ENCODE measurements at regions of chr7 and their contacts with region 1.

Region 1: GRCh38 chr7:105622106-105622731 is 40.9 kb upstream of the EFCAB10 start:
- DNase-seq: no peak
- ATAC-seq: no peak
- H3K4me3 ChIP-seq: no peak overlapping the region
- H3K27ac ChIP-seq: no peak overlapping the region
- H3K4me1 ChIP-seq: no peaks in the 10 kb centered on the region
- H3K27me3 ChIP-seq: no peaks in the 10 kb centered on the region
- CTCF ChIP-seq: no peak

Region 2: GRCh38 chr7:105567821-105568220 is 54.4 kb before region 1 on chr7:
- CTCF ChIA-PET with region 1: no interaction called
- POLR2A ChIA-PET with region 1: no interaction called
- intact Hi-C with region 1: no loop called
- DNase-seq: no peak
- ATAC-seq: peak; percentile 61
- H3K4me3 ChIP-seq: no peak overlapping the region
- H3K27ac ChIP-seq: no peak overlapping the region
- H3K4me1 ChIP-seq: no peaks in the 10 kb centered on the region
- H3K27me3 ChIP-seq: no peaks in the 10 kb centered on the region
- CTCF ChIP-seq: no peak

Region 3: DNA sequence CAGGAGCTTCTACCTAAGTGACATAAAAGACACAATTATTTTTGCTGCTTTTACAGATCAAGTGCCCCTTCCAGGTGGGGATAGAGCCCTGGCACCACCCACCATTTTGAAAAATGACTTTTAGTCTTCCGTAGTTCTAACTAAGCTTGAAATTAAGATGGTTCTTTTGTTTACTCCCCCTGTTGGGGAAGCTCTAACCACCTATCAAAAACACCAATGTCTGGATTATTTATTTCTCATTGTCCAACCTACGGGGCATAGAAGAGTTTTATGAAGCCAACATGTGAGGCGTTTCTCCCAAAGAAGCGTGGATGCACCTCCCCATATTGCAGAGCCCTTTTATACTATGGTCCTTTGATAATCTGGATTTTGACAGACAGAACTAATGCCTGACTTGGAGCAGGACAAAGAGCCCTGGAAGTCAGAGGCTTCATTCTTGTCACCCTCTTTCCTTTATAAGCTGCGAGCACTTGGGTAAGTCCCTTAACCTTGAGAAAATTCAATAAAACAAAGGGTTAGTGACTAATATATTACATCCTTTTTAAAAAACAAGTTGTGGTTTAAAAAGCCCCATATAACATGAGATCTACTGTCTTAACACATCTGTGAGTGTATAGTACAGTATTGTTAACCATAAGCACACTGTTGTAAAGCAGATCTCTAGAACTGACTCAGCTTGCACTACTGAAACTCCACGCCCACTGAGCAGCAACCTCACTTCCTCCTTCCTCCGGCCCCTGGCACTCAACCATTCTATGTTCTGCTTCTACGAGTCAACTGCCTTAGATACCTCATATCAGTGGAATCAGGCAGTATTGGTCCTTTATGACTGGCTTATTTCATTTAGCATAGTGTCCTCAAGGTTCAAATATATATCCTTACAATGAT is 186.7 kb after region 1 on chr7:
- CTCF ChIA-PET with region 1: no interaction called
- POLR2A ChIA-PET with region 1: no interaction called
- intact Hi-C with region 1: no loop called
- DNase-seq: peak; percentile 85
- ATAC-seq: peak; percentile 89
- H3K4me3 ChIP-seq: no peak overlapping the region
- H3K27ac ChIP-seq: peak overlapping the region; percentile 83
- H3K4me1 ChIP-seq: peaks cover 33% of the 10 kb centered on the region
- H3K27me3 ChIP-seq: no peaks in the 10 kb centered on the region
- CTCF ChIP-seq: 0 out of 2 replicates have a peak, but pooled peaks have one; percentile 10

Region 4: GRCh38 chr7:106001886-106002285 is 379.7 kb after region 1 on chr7:
- CTCF ChIA-PET with region 1: interaction called, 10 read pairs
- POLR2A ChIA-PET with region 1: no interaction called
- intact Hi-C with region 1: no loop called
- DNase-seq: no peak
- ATAC-seq: no peak
- H3K4me3 ChIP-seq: no peak overlapping the region
- H3K27ac ChIP-seq: no peak overlapping the region
- H3K4me1 ChIP-seq: no peaks in the 10 kb centered on the region
- H3K27me3 ChIP-seq: no peaks in the 10 kb centered on the region
- CTCF ChIP-seq: no peak

Measured in PC-3 (cell line).